GM12878 (cell line): ENCODE measurements at regions of chr2 and their contacts with region 1.

Region 1: GRCh38 chr2:152407204-152407721 is 72.3 kb downstream of the FMNL2 start:
- DNase-seq: peak; percentile 55
- ATAC-seq: peak; percentile 95
- H3K4me3 ChIP-seq: peak overlapping the region; percentile 20; the same call in 1 of the 2 replicates
- H3K27ac ChIP-seq: peak overlapping the region; percentile 77
- H3K4me1 ChIP-seq: peaks cover 18% of the 10 kb centered on the region
- H3K27me3 ChIP-seq: no peaks in the 10 kb centered on the region
- CTCF ChIP-seq: 0 out of 6 replicates have a peak, but pooled peaks of 1 of the 3 experiments have one; percentile 1
- EP300 ChIP-seq: 0 out of 4 replicates have a peak, but pooled peaks of 1 of the 2 experiments have one; percentile 32
- POLR2A ChIP-seq: peak; percentile 50; the same call in 1 of the 2 replicates
- RAD21 ChIP-seq: no peak

Region 2: DNA sequence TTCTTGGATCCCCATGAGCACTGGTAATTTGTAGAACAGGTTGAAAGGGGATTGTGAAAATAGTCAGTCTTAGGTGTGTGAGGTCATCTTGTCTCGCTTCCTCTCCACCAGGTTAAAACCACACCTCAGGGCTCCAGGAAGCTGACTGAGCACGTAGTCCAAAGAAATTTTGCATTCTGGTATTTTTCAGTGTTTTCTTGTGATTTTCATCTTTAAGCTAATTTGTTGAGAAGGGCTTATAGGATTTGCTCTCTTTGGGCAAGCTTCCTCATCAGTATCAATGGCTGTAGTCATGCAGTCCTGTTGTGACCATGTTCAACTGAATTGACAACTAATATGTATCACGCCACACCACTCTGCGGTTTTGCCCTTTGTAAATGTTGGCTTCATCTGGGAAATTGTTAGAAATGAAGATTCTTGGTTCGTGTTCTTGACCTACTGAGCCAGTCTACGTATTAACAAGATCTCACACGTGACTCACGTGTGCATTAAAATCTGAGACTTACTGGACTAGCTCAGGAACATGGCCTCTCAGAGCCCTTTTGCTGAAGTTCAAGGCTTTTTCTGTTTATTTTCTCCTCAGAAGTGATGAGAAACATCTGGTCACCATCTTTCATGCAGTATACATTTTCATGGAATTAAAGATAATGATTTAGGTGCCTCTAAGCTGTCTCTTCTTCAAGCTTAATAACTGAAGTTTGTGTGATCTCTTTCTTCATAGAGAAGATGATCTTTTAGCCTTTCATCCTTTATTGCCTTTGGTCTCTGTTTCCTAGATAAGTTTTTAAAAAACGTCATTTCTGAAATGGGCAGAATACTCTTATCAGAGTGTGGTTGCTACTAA is 39.5 kb before region 1 on chr2:
- CTCF ChIA-PET with region 1: interaction called, 6 read pairs
- POLR2A ChIA-PET with region 1: interaction called, 8 read pairs
- RAD21 ChIA-PET with region 1: interaction called, 13 read pairs
- SMC1A ChIA-PET with region 1: interaction called, 5 read pairs
- in situ Hi-C with region 1: no loop called
- intact Hi-C with region 1: no loop called
- DNase-seq: peak; percentile 33
- ATAC-seq: peak; percentile 95
- H3K4me3 ChIP-seq: no peak overlapping the region
- H3K27ac ChIP-seq: no peak overlapping the region; the same call in 1 of the 2 replicates
- H3K4me1 ChIP-seq: peaks cover 9% of the 10 kb centered on the region
- H3K27me3 ChIP-seq: no peaks in the 10 kb centered on the region
- CTCF ChIP-seq: no peak
- EP300 ChIP-seq: peak in 1 of 2 experiments; percentile 65; a peak in 1 of 4 replicates
- POLR2A ChIP-seq: no peak
- RAD21 ChIP-seq: no peak

Region 3: DNA sequence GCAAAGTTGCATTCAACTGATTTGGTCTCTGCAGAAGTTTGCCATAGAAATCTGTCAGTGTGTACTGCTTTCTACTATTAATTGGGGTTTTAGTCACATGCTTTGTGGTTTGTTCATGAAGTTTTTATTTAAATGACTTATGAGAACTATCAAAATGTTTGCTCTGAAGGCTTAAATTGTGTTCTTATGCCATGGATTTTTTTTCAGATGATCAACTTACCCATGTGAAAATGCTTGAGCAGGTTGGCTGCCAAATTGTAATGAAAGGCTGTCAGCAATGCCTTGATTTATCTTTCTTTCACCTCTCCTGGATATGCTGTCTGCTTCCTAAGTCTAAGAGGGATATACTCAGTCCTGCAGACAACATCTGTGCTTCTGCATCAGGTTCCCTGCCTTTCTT is 21.6 kb before region 1 on chr2:
- CTCF ChIA-PET with region 1: interaction called, 3 read pairs
- POLR2A ChIA-PET with region 1: no interaction called
- RAD21 ChIA-PET with region 1: interaction called, 5 read pairs
- SMC1A ChIA-PET with region 1: interaction called, 11 read pairs
- in situ Hi-C with region 1: no loop called
- intact Hi-C with region 1: no loop called
- DNase-seq: no peak
- ATAC-seq: no peak; the same call in 2 of the 3 replicates
- H3K4me3 ChIP-seq: no peak overlapping the region
- H3K27ac ChIP-seq: no peak overlapping the region
- H3K4me1 ChIP-seq: no peaks in the 10 kb centered on the region
- H3K27me3 ChIP-seq: no peaks in the 10 kb centered on the region
- CTCF ChIP-seq: no peak
- EP300 ChIP-seq: no peak
- POLR2A ChIP-seq: no peak
- RAD21 ChIP-seq: no peak

Region 4: GRCh38 chr2:152505495-152505906 is 98.2 kb after region 1 on chr2:
- CTCF ChIA-PET with region 1: no interaction called
- POLR2A ChIA-PET with region 1: no interaction called
- RAD21 ChIA-PET with region 1: interaction called, 4 read pairs
- SMC1A ChIA-PET with region 1: interaction called, 11 read pairs
- in situ Hi-C with region 1: no loop called
- intact Hi-C with region 1: no loop called
- DNase-seq: peak; percentile 35
- ATAC-seq: peak; percentile 89
- H3K4me3 ChIP-seq: no peak overlapping the region
- H3K27ac ChIP-seq: peak overlapping the region; percentile 29; the same call in 1 of the 2 replicates
- H3K4me1 ChIP-seq: peaks cover 11% of the 10 kb centered on the region; the same call in 1 of the 2 replicates
- H3K27me3 ChIP-seq: no peaks in the 10 kb centered on the region; a peak in 1 of 4 replicates
- CTCF ChIP-seq: no peak
- EP300 ChIP-seq: peak in 1 of 2 experiments; percentile 46; a peak in 1 of 4 replicates
- POLR2A ChIP-seq: no peak
- RAD21 ChIP-seq: no peak